PC-9 (cell line): ENCODE measurements at regions of chr18 and their contacts with region 1.

Region 1: DNA sequence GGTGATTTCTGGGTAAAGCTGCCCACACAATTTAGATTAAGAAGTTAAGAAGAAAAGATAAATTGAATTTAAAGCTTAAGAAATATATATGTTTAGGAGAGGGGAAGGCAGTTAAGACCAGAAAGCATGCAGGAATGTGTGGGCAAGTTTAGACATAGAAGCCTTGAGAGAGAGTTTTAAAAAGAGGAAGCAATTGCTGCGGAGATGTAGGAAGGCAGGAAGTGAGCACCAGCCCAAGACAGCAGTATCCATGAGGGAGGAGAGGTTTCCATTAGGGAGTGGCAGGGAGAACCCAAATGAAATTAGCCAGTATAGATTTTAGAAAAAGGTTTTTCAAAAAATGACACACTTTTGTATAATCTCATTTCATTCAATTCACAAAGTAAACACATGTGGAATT is 24.3 kb downstream of the DSC2 start:
- DNase-seq: no peak
- H3K4me3 ChIP-seq: no peak overlapping the region
- H3K27ac ChIP-seq: no peak overlapping the region
- H3K4me1 ChIP-seq: no peaks in the 10 kb centered on the region
- H3K27me3 ChIP-seq: no peaks in the 10 kb centered on the region
- CTCF ChIP-seq: no peak

Region 2: GRCh38 chr18:31010601-31011000 is 67.3 kb before region 1 on chr18:
- CTCF ChIA-PET with region 1: no interaction called
- POLR2A ChIA-PET with region 1: no interaction called
- intact Hi-C with region 1: loop called (anchors 10 kb)
- DNase-seq: no peak
- H3K4me3 ChIP-seq: no peak overlapping the region
- H3K27ac ChIP-seq: peak overlapping the region; percentile 51; the same call in 1 of the 2 replicates
- H3K4me1 ChIP-seq: 0 out of 2 replicates have a peak, but pooled peaks cover 3% of the 10 kb centered on the region
- H3K27me3 ChIP-seq: no peaks in the 10 kb centered on the region
- CTCF ChIP-seq: no peak

Region 3: DNA sequence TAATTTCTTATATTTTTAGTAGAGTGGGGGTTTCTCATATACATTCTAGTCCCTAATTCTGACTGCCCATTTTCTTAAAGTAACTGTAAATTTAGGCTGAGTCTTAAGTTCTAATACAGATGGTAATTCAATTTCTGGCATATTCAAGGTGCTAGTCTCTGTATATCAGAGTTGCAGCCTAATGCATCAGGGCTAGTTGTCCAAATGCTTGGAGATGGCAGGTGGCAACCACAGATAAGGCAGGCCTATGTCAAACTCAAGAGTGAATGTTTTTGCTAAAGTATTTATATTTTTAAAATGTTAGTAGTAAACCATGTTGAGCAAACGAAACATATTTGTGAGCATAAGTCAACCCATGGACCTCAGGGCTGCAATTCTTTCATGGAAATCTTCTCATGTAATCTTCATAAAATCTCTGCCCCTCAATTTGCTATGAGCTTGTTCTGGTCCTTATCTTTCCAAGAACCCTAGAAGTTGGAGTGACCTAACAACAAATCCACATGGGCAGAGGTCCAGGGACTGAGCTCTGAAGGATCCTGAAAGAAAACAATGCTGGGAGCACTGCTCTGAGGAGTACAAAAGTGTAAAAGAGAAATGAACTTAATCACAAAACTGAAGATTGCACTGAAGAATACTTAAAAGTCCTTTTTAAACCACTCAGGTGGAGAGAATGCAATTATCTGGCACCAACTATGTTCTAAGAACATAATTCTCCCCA is 51.7 kb after region 1 on chr18:
- CTCF ChIA-PET with region 1: no interaction called
- POLR2A ChIA-PET with region 1: no interaction called
- intact Hi-C with region 1: no loop called
- DNase-seq: no peak
- H3K4me3 ChIP-seq: no peak overlapping the region
- H3K27ac ChIP-seq: no peak overlapping the region
- H3K4me1 ChIP-seq: no peaks in the 10 kb centered on the region
- H3K27me3 ChIP-seq: no peaks in the 10 kb centered on the region
- CTCF ChIP-seq: no peak

Region 4: GRCh38 chr18:31316974-31317373 is 239.1 kb after region 1 on chr18:
- CTCF ChIA-PET with region 1: no interaction called
- POLR2A ChIA-PET with region 1: no interaction called
- intact Hi-C with region 1: no loop called
- DNase-seq: no peak
- H3K4me3 ChIP-seq: no peak overlapping the region
- H3K27ac ChIP-seq: no peak overlapping the region
- H3K4me1 ChIP-seq: no peaks in the 10 kb centered on the region
- H3K27me3 ChIP-seq: no peaks in the 10 kb centered on the region
- CTCF ChIP-seq: no peak